A673 (cell line): ENCODE measurements at regions of chr1 and their contacts with region 1.

Region 1: GRCh38 chr1:156866249-156866909 is 5.7 kb downstream of the NTRK1 start:
- DNase-seq: no peak
- H3K4me3 ChIP-seq: no peak overlapping the region
- H3K27ac ChIP-seq: no peak overlapping the region
- H3K4me1 ChIP-seq: peaks cover 10% of the 10 kb centered on the region
- H3K27me3 ChIP-seq: peaks cover under 1% of the 10 kb centered on the region
- CTCF ChIP-seq: no peak

Region 2: GRCh38 chr1:156712626-156713025 is 153.8 kb before region 1 on chr1:
- CTCF ChIA-PET with region 1: no interaction called
- POLR2A ChIA-PET with region 1: no interaction called
- intact Hi-C with region 1: no loop called
- DNase-seq: no peak
- H3K4me3 ChIP-seq: no peak overlapping the region
- H3K27ac ChIP-seq: no peak overlapping the region
- H3K4me1 ChIP-seq: no peaks in the 10 kb centered on the region
- H3K27me3 ChIP-seq: no peaks in the 10 kb centered on the region
- CTCF ChIP-seq: no peak

Region 3: DNA sequence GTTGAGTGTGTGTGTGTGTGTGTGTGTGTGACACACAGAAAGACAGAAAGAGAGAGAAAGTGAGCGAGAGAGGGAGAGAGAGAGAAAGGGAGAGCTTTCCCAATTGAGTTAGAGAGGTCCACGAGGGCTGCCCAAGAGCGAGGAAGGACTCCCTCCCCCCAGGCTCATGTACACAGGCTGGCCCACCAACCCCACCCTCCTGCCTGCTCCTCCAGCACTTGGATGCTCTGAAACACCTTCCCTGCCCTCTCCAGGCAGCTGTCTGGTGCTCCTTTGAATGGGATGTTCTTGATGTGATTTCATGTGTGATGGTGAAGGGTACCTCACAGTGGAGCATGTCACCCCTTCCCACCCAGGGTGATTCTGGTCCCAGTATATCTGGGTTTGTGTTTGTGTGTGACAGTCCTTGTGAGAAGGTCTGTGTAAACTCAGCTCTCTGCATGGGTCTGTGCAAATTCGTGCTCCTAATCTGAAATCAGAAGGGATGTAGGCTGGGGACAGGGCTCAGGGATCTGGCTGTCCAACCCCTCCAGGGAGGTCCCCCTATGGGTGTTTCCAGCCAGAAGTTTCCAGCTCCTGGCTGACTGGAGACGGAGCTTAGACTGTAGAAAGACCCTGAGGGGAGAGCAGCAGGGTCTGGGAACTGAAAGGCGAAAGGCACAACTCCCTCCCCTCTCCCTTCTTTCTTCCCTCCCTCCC is 20.4 kb after region 1 on chr1:
- CTCF ChIA-PET with region 1: interaction called, 8 read pairs
- POLR2A ChIA-PET with region 1: interaction called, 12 read pairs
- intact Hi-C with region 1: loop called (anchors 2 kb)
- DNase-seq: no peak
- H3K4me3 ChIP-seq: no peak overlapping the region
- H3K27ac ChIP-seq: no peak overlapping the region
- H3K4me1 ChIP-seq: no peaks in the 10 kb centered on the region
- H3K27me3 ChIP-seq: no peaks in the 10 kb centered on the region
- CTCF ChIP-seq: no peak